ENCODE measurements at regions of chr7 and their contacts with region 1.

Region 1: DNA sequence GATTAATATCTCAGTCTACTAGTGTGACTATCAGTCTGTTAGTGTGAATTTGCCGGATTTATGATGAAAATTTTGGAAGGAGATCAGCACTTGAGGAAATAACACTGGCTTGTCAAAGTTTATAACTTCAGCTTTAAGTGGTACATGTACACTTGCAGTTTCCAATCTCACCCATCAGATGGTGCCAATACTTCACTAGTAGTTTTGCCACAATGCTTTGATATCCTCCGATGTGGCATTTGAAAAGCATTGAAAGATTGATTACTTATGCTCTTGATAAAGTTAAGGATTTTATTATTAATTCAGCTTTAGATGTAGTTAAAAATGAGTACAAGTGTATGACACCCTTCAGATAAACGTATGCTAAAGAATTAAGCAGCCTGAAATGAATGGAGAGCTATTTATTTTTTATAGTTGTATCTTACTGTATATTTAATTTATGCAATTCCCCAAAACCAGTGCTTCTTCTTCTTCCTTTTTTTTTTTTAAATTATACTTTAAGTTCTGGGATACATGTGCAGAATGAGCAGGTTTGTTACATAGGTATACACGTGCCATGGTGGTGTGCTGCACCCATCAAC is 98.2 kb downstream of the ANLN start:
- DNase-seq: peak in 1 of 10 donors; percentile 26
- H3K4me3 ChIP-seq: no peak overlapping the region
- H3K27ac ChIP-seq: no peak overlapping the region
- H3K27me3 ChIP-seq: no peaks in the 10 kb centered on the region
- CTCF ChIP-seq: peak; percentile 41 to 95 (median 83)

Region 2: GRCh38 chr7:36670585-36671431 is 183.0 kb after region 1 on chr7:
- intact Hi-C with region 1: loop called (anchors 5 kb)
- DNase-seq: peak in 9 of 10 donors; percentile 23 to 60 (median 49)
- H3K4me3 ChIP-seq: no peak overlapping the region
- H3K27ac ChIP-seq: no peak overlapping the region
- H3K27me3 ChIP-seq: no peaks in the 10 kb centered on the region
- CTCF ChIP-seq: peak; percentile 56 to 90 (median 84)

Region 3: DNA sequence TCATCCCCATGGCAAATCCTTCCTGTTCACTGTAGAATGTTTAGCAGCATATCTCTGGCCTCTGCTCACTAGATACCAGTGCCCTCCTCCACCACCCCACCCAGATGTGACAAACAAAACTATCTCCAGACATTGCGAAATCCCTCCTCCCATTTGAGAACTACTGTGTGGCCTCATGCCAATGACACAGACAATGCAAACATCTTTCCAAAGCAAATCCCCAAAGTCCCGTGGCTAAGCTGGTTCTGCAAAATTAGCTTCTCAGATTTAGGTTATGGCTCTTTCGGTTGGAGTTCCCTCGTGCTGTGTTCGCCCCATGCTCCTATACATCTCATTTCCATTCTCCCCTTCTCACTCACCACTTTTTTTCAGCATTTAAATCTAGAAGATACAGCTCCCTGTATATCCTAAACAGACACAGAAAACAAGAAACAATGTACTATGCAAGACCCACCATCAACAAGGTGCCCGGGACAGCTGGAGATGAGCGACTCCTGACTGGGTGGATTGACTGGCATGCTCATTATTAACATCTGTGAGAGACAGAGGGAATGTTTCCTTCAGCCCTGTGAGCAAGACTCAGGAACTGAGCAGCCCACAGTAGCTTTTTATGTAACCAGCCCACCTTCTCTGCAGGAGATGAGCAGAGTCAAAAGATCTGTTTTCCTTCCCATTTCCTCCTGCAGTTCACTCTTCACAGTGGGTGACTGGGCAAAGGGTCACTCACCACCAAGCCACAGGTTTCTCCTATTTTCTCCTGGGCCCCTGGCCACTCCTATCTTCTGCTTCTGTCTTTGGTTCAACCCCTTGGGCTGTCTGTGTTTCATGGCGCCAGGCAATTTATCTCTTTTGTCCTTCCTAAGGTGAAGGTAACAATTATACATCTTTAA is 462.1 kb after region 1 on chr7:
- intact Hi-C with region 1: loop called in 1 of 2 experiments (anchors 10 kb)
- DNase-seq: no peak
- H3K4me3 ChIP-seq: no peak overlapping the region
- H3K27ac ChIP-seq: peak overlapping the region in 55 of 59 donors; percentile 3 to 76 (median 55)
- H3K27me3 ChIP-seq: no peaks in the 10 kb centered on the region
- CTCF ChIP-seq: no peak

Region 4: GRCh38 chr7:36986429-36987362 is 498.9 kb after region 1 on chr7:
- intact Hi-C with region 1: loop called in 1 of 2 experiments (anchors 10 kb)
- DNase-seq: peak; percentile 59 to 89 (median 76)
- H3K4me3 ChIP-seq: peak overlapping the region in 58 of 59 donors; percentile 3 to 70 (median 55)
- H3K27ac ChIP-seq: peak overlapping the region in 51 of 59 donors; percentile 5 to 85 (median 62)
- H3K27me3 ChIP-seq: no peaks in the 10 kb centered on the region
- CTCF ChIP-seq: peak; percentile 44 to 97 (median 86)

Region 5: DNA sequence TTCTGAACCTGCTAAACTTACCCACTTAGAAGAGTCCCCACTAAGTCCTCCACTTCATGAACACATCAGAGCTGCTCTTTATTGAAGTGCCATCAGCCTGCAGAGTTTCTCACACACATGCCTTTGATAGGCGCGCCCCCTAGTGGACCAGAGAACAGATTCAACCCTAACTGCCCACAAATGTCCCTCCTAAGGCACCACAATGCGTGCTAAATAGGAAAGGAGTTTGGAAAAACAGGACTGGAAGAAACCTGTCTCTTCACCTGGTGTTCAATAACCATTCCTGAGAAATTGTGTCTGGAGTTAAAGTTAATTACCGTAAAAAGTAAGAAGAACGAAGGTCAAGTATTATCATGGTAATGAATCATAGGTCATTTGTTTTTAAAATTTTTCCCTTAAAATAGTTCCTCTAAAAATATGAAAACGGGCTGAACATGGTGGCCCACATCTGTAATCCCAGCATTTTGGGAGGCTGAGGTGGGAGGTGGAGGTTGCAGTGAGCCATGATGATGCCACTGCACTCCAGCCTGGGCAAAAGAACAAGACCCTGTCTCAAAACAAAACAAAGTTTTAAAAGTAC is 711.1 kb after region 1 on chr7:
- intact Hi-C with region 1: loop called (anchors 5 kb)
- DNase-seq: peak; percentile 83 to 95 (median 86)
- H3K4me3 ChIP-seq: peak overlapping the region in 2 of 59 donors; percentile 14 to 25
- H3K27ac ChIP-seq: peak overlapping the region in 26 of 59 donors; percentile 4 to 93 (median 48)
- H3K27me3 ChIP-seq: no peaks in the 10 kb centered on the region
- CTCF ChIP-seq: peak; percentile 81 to 96 (median 92)